Natural killer cell (primary cell): ENCODE measurements at regions of chr5 and their contacts with region 1.

Region 1: GRCh38 chr5:112995764-112996618 is 19.4 kb downstream of the DCP2 start:
- DNase-seq: peak; percentile 71 to 86
- ATAC-seq: peak; percentile 87 to 98 (median 94)
- H3K4me3 ChIP-seq: no peak overlapping the region
- H3K4me3 Mint-ChIP-seq: no peak overlapping the region
- H3K27ac ChIP-seq: no peak overlapping the region
- H3K27ac Mint-ChIP-seq: peak overlapping the region; percentile 45 to 59
- H3K4me1 ChIP-seq: no peaks in the 10 kb centered on the region
- H3K4me1 Mint-ChIP-seq: peaks cover 18 to 24% of the 10 kb centered on the region in 2 donors
- H3K27me3 ChIP-seq: no peaks in the 10 kb centered on the region
- H3K27me3 Mint-ChIP-seq: no peaks in the 10 kb centered on the region
- CTCF ChIP-seq: peak; percentile 88

Region 2: DNA sequence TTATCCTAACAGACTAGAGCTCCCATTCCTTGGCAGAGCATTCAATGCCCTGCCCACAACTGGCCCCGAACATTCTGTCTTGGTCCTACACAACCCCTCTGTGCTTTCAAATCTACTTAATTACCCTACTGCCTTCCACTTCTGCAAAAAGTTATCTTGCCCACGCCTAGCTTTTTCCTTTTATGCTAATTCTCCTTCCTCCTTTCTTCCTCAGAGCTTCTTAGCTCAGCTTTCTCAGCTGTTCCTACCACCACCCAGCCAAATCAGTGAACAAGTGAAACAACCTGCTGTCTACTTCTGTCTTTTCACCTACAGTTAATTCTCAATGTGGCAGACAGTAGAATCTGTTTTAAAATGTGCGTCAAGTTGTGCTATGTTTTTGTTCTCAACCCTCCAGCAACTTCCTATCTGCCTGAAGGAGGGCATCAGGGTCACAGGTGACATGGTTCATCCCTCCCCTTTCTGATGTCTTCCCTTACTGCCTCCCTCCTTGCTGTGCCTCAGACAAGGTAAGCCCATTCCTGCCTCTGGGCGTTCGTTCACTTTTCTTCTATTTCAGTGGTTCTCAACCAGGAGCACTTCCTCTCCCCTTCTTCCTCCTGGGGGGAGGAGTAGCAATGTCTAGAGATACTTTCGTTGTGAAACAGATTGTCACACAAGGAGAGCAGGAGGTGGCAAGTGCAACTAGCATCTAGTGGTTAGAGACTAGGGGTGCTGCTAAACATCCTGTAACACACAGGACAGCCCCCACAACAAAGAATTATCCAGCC is 72.7 kb before region 1 on chr5:
- intact Hi-C with region 1: no loop called
- DNase-seq: peak; percentile 30 to 73
- ATAC-seq: peak; percentile 57 to 80 (median 59)
- H3K4me3 ChIP-seq: no peak overlapping the region
- H3K4me3 Mint-ChIP-seq: peak overlapping the region; percentile 85
- H3K27ac ChIP-seq: peak overlapping the region; percentile 68
- H3K27ac Mint-ChIP-seq: peak overlapping the region; percentile 86 to 90
- H3K4me1 ChIP-seq: peaks cover 43% of the 10 kb centered on the region
- H3K4me1 Mint-ChIP-seq: peaks cover 49 to 53% of the 10 kb centered on the region in 2 donors
- H3K27me3 ChIP-seq: no peaks in the 10 kb centered on the region
- H3K27me3 Mint-ChIP-seq: no peaks in the 10 kb centered on the region
- CTCF ChIP-seq: no peak

Region 3: DNA sequence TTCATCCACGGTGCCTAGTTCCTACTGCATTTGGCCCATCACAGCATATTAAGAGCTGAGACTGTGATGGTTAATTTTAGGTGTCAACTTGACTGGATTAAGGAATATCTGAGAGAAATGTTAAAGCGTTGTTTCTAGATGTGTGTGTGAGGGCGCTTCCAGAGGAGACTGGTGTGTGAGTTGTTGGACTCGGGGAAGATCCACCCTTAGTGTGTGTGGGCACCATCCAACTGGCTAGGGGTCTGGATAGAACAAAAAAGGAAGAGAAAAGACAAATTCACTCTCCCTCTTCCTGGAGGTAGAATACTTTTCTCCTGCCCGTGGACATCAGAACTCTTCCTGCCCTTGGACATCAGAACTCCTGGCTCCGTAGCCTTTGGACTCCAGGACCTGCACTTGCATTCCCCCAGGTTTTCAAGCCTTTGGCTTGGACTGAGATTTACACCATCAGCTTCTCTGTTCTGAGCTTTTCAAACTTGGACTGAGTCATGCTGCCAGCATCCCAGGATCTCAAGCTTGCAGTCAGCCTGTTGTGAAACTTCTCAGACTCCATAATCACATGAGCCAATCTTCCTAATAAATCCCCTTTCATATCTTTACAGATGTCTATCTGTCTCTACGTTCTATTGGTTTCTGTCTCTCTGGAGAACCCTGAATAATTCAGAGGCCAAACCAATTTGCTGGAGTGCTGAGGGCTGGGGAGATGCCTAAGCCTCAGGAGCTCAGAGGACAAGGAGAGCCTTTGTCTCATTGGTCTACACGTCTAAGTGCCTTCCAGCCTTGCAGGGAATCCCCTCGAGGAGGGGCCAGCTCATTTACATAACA is 145.1 kb after region 1 on chr5:
- intact Hi-C with region 1: loop called (anchors 10 kb)
- DNase-seq: no peak
- ATAC-seq: no peak
- H3K4me3 ChIP-seq: no peak overlapping the region
- H3K4me3 Mint-ChIP-seq: no peak overlapping the region
- H3K27ac ChIP-seq: no peak overlapping the region
- H3K27ac Mint-ChIP-seq: no peak overlapping the region
- H3K4me1 ChIP-seq: no peaks in the 10 kb centered on the region
- H3K4me1 Mint-ChIP-seq: no peaks in the 10 kb centered on the region
- H3K27me3 ChIP-seq: no peaks in the 10 kb centered on the region
- H3K27me3 Mint-ChIP-seq: peaks cover 13 to 37% of the 10 kb centered on the region in 2 donors
- CTCF ChIP-seq: no peak

Region 4: DNA sequence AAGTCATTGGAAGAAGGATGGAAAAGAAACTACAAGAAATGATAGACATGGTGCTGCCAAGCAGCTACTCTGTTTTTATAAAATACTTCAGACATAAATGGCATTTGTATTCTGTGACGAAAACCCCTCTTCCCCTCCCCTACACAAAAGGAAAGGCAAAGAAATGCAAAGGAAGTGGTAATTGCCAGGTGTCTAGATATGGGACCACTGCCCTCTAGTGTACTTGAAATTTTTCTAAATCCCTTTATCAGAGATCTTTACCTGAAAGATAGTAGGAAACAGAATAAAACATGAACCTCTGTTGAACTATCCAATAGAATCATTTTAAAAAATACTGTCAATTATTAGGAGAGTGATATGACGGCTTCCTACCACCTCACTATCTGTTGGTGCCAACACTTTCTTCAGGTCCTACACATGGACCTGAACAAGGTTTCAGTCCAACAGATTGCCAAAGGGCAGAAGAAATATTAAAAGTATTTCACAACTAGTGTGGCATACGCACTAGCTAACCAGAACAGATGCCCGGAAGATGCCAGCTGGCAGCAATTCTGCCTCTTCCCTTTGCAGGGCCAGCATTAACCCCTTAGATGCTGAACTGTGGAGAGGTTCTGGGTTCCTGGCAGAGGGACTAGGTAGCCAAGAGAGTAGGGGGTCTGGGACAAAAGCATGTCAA is 334.7 kb after region 1 on chr5:
- intact Hi-C with region 1: loop called (anchors 1 kb)
- DNase-seq: peak in 1 of 2 donors; percentile 79
- ATAC-seq: peak; percentile 78 to 86 (median 83)
- H3K4me3 ChIP-seq: no peak overlapping the region
- H3K4me3 Mint-ChIP-seq: no peak overlapping the region
- H3K27ac ChIP-seq: no peak overlapping the region
- H3K27ac Mint-ChIP-seq: peak overlapping the region in 1 of 2 donors; percentile 26
- H3K4me1 ChIP-seq: peaks cover 3% of the 10 kb centered on the region
- H3K4me1 Mint-ChIP-seq: peaks cover 12 to 16% of the 10 kb centered on the region in 2 donors
- H3K27me3 ChIP-seq: no peaks in the 10 kb centered on the region
- H3K27me3 Mint-ChIP-seq: peaks cover 2 to 4% of the 10 kb centered on the region in 2 donors
- CTCF ChIP-seq: peak; percentile 32

Region 5: GRCh38 chr5:113513384-113514288 is 517.6 kb after region 1 on chr5 and contains the start of gene YTHDC2:
- intact Hi-C with region 1: loop called (anchors 5 kb)
- DNase-seq: peak; percentile 86 to 94
- ATAC-seq: peak; percentile 93 to 95 (median 93)
- H3K4me3 ChIP-seq: peak within 1 kb of the TSS; percentile 67
- H3K4me3 Mint-ChIP-seq: peak within 1 kb of the TSS; percentile 90
- H3K27ac ChIP-seq: peak within 1 kb of the TSS; percentile 94
- H3K27ac Mint-ChIP-seq: peak within 1 kb of the TSS; percentile 89 to 91
- H3K4me1 ChIP-seq: peaks cover 8% of the 10 kb centered on the region
- H3K4me1 Mint-ChIP-seq: peaks cover 32 to 37% of the 10 kb centered on the region in 2 donors
- H3K27me3 ChIP-seq: peaks cover under 1% of the 10 kb centered on the region
- H3K27me3 Mint-ChIP-seq: peaks cover 14 to 30% of the 10 kb centered on the region in 2 donors
- CTCF ChIP-seq: no peak
- total RNA-seq, gene YTHDC2: 37.7 to 38.8 (median 38.0) TPM

Region 6: GRCh38 chr5:113606298-113607134 is 610.5 kb after region 1 on chr5:
- intact Hi-C with region 1: loop called (anchors 1 kb)
- DNase-seq: peak in 1 of 2 donors; percentile 79
- ATAC-seq: peak; percentile 55 to 81 (median 63)
- H3K4me3 ChIP-seq: no peak overlapping the region
- H3K4me3 Mint-ChIP-seq: no peak overlapping the region
- H3K27ac ChIP-seq: no peak overlapping the region
- H3K27ac Mint-ChIP-seq: no peak overlapping the region
- H3K4me1 ChIP-seq: no peaks in the 10 kb centered on the region
- H3K4me1 Mint-ChIP-seq: no peaks in the 10 kb centered on the region
- H3K27me3 ChIP-seq: peaks cover 23% of the 10 kb centered on the region
- H3K27me3 Mint-ChIP-seq: peaks cover 21 to 38% of the 10 kb centered on the region in 2 donors
- CTCF ChIP-seq: peak; percentile 63

Region 7: DNA sequence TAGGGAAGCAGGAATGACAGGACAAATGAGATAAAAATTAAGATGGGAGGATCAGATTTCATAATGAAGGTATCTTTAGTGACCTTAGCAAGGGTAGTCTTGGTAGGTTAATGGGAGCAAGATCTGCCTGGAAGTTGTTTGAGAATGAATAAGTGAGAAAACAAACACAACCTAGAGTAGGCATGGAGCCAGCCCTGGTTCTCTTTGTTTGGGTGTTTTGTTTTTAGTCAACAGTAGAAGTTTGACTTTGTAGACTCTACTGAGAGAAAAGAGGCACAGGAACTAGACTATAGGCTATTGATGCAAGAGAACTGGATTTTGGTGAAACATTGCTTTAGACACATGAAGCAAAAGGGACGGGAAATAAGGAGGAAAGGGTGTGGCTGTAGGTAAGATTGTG is 1406.2 kb after region 1 on chr5:
- intact Hi-C with region 1: no loop called
- DNase-seq: no peak
- ATAC-seq: no peak
- H3K4me3 ChIP-seq: no peak overlapping the region
- H3K4me3 Mint-ChIP-seq: no peak overlapping the region
- H3K27ac ChIP-seq: no peak overlapping the region
- H3K27ac Mint-ChIP-seq: no peak overlapping the region
- H3K4me1 ChIP-seq: no peaks in the 10 kb centered on the region
- H3K4me1 Mint-ChIP-seq: no peaks in the 10 kb centered on the region
- H3K27me3 ChIP-seq: no peaks in the 10 kb centered on the region
- H3K27me3 Mint-ChIP-seq: no peaks in the 10 kb centered on the region
- CTCF ChIP-seq: no peak